ENCODE measurements at regions of chr17 and their contacts with region 1.

Region 1: GRCh38 chr17:8887834-8888703 is 20.6 kb upstream of the PIK3R6 start:
- H3K4me3 ChIP-seq: no peak overlapping the region
- H3K27ac ChIP-seq: no peak overlapping the region
- H3K4me1 ChIP-seq: no peaks in the 10 kb centered on the region
- CTCF ChIP-seq: peak; percentile 70

Region 2: DNA sequence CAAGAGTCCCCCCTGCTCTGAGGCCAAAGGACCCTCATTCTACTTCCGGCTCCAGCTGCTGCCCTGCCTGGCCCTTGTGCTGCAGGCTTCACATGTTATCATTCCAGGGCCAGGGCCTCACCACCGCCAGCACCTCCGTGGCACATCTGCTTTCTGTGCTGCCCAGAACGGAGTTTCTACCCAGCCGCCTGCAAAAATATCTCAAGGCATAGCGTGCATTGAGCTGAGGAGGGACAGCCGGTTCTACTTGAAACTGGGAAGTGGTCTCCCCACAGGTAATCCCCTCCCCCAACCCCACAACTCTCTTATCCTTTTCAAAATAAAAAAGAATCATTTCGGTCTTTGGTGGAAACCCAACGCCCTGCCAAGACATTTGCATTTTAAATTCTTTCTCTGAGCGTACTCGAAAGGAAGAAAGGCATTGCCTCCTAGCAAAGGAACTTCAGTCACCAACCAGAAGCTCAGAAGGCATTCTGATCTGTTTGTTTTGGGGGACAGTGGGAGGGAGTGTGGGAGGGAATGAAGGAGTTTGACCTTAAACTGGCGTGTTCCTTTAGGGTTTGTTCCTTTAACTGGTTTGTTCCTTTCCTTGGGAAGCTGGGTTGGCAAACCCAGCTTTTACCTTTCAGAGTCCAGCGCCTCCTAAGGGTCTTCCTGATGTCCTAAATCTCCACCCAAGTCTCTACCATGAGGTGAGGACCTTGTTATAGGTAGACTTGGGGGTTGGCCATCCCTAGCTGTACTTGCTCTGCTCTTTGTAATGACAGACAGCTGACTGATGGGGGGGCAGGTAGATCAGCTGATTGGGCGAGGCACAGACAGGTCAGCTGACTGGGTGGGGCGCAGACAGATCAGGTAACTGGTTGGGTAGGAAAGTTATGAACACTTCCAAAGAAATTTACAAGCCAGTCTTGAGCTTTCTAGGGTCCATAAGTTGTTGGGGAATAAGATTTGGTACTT is 12.8 kb after region 1 on chr17:
- CTCF ChIA-PET with region 1: interaction called, 13 read pairs
- POLR2A ChIA-PET with region 1: no interaction called
- H3K4me3 ChIP-seq: no peak overlapping the region
- H3K27ac ChIP-seq: no peak overlapping the region
- H3K4me1 ChIP-seq: no peaks in the 10 kb centered on the region
- CTCF ChIP-seq: no peak

Measured in HEK293 (cell line).